Activated CD4-positive, alpha-beta memory T cell treated with anti-CD3 and anti-CD28 coated beads for 36 hours (primary cell): ENCODE measurements at regions of chr5 and their contacts with region 1.

Region 1: DNA sequence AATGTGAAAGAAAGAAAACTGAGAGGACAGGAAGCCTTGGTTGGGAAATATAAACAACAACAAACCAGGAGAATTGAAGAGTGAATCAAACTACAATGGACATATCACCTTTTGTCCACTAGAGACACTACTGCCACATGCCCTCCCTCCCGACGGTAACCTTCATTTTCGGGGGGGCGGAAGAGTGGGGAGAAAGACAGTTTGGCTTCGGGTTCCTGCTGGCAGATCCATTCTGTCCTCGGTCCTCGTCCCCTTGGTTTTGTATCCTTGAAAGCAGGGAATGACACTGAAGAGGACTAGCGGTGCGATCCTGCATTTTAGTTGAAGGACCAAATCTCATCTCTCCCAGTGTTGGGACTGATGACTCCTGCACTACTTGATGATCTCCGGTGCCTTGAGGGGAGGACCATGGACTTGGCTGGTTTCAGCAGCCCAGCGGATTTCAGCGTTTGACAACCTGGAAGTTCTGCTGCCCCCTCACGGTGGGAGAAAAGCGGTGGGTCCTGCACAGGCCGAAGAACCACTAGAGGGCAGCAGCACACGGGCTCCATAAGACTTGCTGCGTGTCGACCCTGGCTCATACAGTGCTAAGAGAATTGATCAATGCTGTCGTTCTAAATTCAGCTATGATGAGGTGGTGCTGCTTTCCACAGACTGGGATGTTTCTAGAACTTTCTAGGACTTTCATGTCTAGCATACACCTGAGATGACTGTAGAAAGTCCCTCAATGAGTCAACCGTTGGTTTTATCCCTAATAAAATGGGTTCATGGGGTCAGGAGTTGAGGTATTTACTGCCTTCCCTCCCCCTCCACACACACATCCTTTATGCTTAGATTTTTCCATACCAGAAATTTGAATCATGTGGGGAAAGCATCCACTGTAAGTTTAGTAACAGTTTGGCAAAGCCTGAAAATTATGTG is 15.1 kb upstream of the ZNF131 start:
- DNase-seq: peak; percentile 92
- H3K4me3 Mint-ChIP-seq: peak overlapping the region; percentile 75
- H3K27ac Mint-ChIP-seq: peak overlapping the region; percentile 79
- H3K4me1 Mint-ChIP-seq: peaks cover 49% of the 10 kb centered on the region
- H3K27me3 Mint-ChIP-seq: no peaks in the 10 kb centered on the region

Region 2: DNA sequence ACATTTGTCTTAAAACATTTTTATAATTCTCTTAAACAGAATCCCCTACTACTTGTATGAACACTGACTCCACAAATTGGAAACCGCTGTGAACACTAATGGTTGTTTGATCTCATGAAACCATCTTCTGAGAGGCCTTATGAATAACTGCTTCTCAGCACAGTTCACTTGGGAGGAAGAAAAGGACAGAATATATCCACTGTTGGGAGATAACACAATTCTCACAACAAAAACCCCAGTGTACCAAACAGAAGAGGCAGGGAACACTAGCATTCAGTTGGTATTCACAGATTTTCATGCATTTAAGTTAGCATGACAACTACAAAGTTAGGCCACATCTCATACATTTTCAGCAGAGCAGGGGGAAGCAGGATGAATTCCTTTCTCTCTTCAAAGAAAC is 204.9 kb before region 1 on chr5:
- CTCF ChIA-PET with region 1: no interaction called
- POLR2A ChIA-PET with region 1: no interaction called
- intact Hi-C with region 1: no loop called
- DNase-seq: no peak
- H3K4me3 Mint-ChIP-seq: no peak overlapping the region
- H3K27ac Mint-ChIP-seq: no peak overlapping the region
- H3K4me1 Mint-ChIP-seq: no peaks in the 10 kb centered on the region
- H3K27me3 Mint-ChIP-seq: peaks cover 3% of the 10 kb centered on the region

Region 3: DNA sequence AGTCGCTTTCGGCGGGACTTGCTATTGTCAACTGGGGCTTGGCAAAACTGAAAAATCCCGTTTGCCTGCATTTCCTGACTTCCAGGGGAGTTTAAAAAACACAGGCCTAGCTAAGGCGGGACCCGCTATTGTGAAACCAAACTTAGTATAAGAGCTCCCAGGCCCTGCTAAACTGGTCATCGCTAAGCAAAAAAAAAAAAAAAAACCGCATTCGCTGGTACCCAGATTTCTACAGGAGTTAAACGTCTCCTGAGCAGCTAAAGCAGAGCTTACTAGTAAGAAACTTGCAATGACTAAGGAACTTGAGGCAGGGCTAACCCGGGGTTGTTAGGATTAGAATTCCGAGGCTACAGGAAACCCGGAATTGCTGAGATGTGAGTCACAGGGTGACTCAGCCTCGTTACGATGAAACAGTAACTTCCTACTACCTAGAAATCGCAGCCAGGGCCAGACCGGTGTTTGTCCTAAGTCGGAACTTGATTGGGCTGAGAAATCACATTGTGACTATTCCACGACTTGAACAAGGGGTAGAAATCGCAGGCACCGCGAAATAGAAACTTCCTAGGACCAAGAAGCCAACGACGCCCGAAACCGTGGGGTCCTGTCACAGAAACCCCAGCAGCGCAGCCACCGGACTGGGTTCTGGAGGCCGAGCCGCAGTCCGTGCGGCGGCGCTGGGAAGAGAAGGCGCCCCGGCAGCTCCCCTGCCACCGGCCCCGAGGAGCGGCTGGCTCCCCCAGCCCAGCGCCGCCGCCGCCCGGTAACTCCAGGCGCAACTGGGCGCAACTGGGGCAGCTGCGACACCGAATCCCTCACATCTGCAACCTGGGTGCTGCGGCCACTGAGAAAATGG is 155.0 kb before region 1 on chr5:
- CTCF ChIA-PET with region 1: interaction called, 4 read pairs
- POLR2A ChIA-PET with region 1: no interaction called
- intact Hi-C with region 1: loop called (anchors 1 kb)
- DNase-seq: peak; percentile 86
- H3K4me3 Mint-ChIP-seq: peak overlapping the region; percentile 94
- H3K27ac Mint-ChIP-seq: peak overlapping the region; percentile 97
- H3K4me1 Mint-ChIP-seq: peaks cover 30% of the 10 kb centered on the region
- H3K27me3 Mint-ChIP-seq: no peaks in the 10 kb centered on the region

Region 4: GRCh38 chr5:43040287-43041098 is 65.1 kb before region 1 on chr5 and contains the start of gene ANXA2R:
- CTCF ChIA-PET with region 1: interaction called, 8 read pairs
- POLR2A ChIA-PET with region 1: no interaction called
- intact Hi-C with region 1: loop called (anchors 1 kb)
- DNase-seq: peak; percentile 97
- H3K4me3 Mint-ChIP-seq: peak within 1 kb of the TSS; percentile 94
- H3K27ac Mint-ChIP-seq: peak within 1 kb of the TSS; percentile 96
- H3K4me1 Mint-ChIP-seq: peaks cover 41% of the 10 kb centered on the region
- H3K27me3 Mint-ChIP-seq: no peaks in the 10 kb centered on the region
- total RNA-seq, gene ANXA2R: 2.8 to 3.8 TPM

Region 5: DNA sequence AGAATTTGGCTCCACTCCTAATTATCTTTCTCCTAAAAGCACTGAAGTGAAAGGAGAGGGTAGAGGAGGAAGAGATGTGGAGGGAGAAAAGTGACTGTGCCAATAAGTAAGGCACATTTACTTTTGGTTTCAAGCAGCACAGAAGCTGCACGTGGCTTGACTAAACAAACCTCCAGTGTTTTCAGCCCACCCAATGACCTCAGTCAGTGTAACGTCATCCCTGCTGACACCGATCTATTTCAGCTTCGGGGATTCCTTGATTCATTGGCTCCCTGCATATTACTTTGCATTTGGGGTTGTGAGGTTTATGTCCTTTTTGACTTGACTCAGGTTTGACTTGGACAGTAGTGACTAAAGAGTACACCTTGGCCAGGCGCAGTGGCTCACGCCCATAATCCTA is 50.8 kb after region 1 on chr5:
- CTCF ChIA-PET with region 1: no interaction called
- POLR2A ChIA-PET with region 1: no interaction called
- intact Hi-C with region 1: loop called (anchors 1 kb)
- DNase-seq: peak; percentile 21
- H3K4me3 Mint-ChIP-seq: no peak overlapping the region
- H3K27ac Mint-ChIP-seq: peak overlapping the region; percentile 19
- H3K4me1 Mint-ChIP-seq: peaks cover 41% of the 10 kb centered on the region
- H3K27me3 Mint-ChIP-seq: no peaks in the 10 kb centered on the region

Region 6: GRCh38 chr5:43389679-43390329 is 284.2 kb after region 1 on chr5:
- CTCF ChIA-PET with region 1: interaction called, 26 read pairs
- POLR2A ChIA-PET with region 1: no interaction called
- intact Hi-C with region 1: loop called (anchors 1 kb)
- DNase-seq: peak; percentile 58
- H3K4me3 Mint-ChIP-seq: no peak overlapping the region
- H3K27ac Mint-ChIP-seq: no peak overlapping the region
- H3K4me1 Mint-ChIP-seq: peaks cover 31% of the 10 kb centered on the region
- H3K27me3 Mint-ChIP-seq: no peaks in the 10 kb centered on the region